ENCODE measurements at regions of chr14 and their contacts with region 1.

Region 1: GRCh38 chr14:22556990-22557623 is 31.9 kb downstream of the DAD1 start:
- DNase-seq: peak; percentile 84 to 97 (median 93)
- ATAC-seq: peak; percentile 48
- H3K4me3 ChIP-seq: peak overlapping the region; percentile 65
- H3K4me3 Mint-ChIP-seq: peak overlapping the region; percentile 67 to 95 (median 88)
- H3K27ac ChIP-seq: peak overlapping the region; percentile 96
- H3K27ac Mint-ChIP-seq: peak overlapping the region; percentile 94 to 99 (median 99)
- H3K4me1 ChIP-seq: peaks cover 87 to 90% of the 10 kb centered on the region in 2 donors
- H3K4me1 Mint-ChIP-seq: peaks cover 62 to 95% (median 92%) of the 10 kb centered on the region in 7 donors
- H3K27me3 ChIP-seq: no peaks in the 10 kb centered on the region
- H3K27me3 Mint-ChIP-seq: peaks cover 0 to 4% (median 0%) of the 10 kb centered on the region in 5 donors

Region 2: DNA sequence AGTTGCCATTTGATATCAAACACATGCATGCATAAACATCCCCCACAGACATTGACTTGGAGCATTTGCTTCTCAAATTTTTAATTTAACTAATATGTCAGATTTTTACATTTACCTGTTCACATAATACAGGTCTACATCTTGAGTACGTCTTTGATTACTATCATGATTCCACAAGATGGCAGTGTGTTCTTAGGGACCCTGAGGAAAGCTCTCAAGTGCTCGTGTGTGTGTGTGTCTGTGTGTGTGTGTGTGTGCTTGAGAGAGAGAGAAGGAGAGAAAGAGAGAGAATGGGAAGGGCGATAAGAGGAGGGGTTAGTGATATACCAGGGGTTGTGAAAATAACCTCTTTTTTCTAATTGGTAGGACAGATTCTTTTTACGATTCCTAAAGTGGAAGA is 716.3 kb before region 1 on chr14:
- CTCF ChIA-PET with region 1: interaction called, 3 read pairs
- POLR2A ChIA-PET with region 1: interaction called, 21 read pairs
- intact Hi-C with region 1: loop called (anchors 1 to 5 kb)
- DNase-seq: peak in 6 of 9 donors; percentile 21 to 50 (median 33)
- ATAC-seq: peak; percentile 76
- H3K4me3 ChIP-seq: no peak overlapping the region
- H3K4me3 Mint-ChIP-seq: peak overlapping the region; percentile 41 to 83 (median 66)
- H3K27ac ChIP-seq: no peak overlapping the region
- H3K27ac Mint-ChIP-seq: peak overlapping the region in 8 of 9 donors; percentile 50 to 90 (median 78)
- H3K4me1 ChIP-seq: no peaks in the 10 kb centered on the region
- H3K4me1 Mint-ChIP-seq: peaks cover 0 to 10% (median 5%) of the 10 kb centered on the region in 7 donors
- H3K27me3 ChIP-seq: no peaks in the 10 kb centered on the region
- H3K27me3 Mint-ChIP-seq: peaks cover 5 to 41% (median 16%) of the 10 kb centered on the region in 5 donors

Region 3: GRCh38 chr14:21965042-21965441 is 592.1 kb before region 1 on chr14:
- CTCF ChIA-PET with region 1: interaction called, 5 read pairs
- POLR2A ChIA-PET with region 1: interaction called, 3 read pairs
- intact Hi-C with region 1: loop called in 1 of 2 experiments (anchors 1 kb)
- DNase-seq: peak in 8 of 9 donors; percentile 21 to 72 (median 61)
- ATAC-seq: peak; percentile 88
- H3K4me3 ChIP-seq: no peak overlapping the region
- H3K4me3 Mint-ChIP-seq: peak overlapping the region; percentile 50 to 78 (median 70)
- H3K27ac ChIP-seq: no peak overlapping the region
- H3K27ac Mint-ChIP-seq: peak overlapping the region; percentile 12 to 90 (median 78)
- H3K4me1 ChIP-seq: no peaks in the 10 kb centered on the region
- H3K4me1 Mint-ChIP-seq: peaks cover 8 to 48% (median 33%) of the 10 kb centered on the region in 7 donors
- H3K27me3 ChIP-seq: no peaks in the 10 kb centered on the region
- H3K27me3 Mint-ChIP-seq: peaks cover 0 to 12% (median 0%) of the 10 kb centered on the region in 5 donors

Region 4: GRCh38 chr14:22163051-22163450 is 394.1 kb before region 1 on chr14:
- CTCF ChIA-PET with region 1: interaction called, 3 read pairs
- POLR2A ChIA-PET with region 1: interaction called, 3 read pairs
- intact Hi-C with region 1: loop called (anchors 1 to 5 kb)
- DNase-seq: peak in 4 of 9 donors; percentile 0 to 31 (median 23)
- ATAC-seq: peak; percentile 46
- H3K4me3 ChIP-seq: peak overlapping the region; percentile 20
- H3K4me3 Mint-ChIP-seq: peak overlapping the region; percentile 47 to 92 (median 88)
- H3K27ac ChIP-seq: no peak overlapping the region
- H3K27ac Mint-ChIP-seq: peak overlapping the region; percentile 29 to 91 (median 81)
- H3K4me1 ChIP-seq: no peaks in the 10 kb centered on the region
- H3K4me1 Mint-ChIP-seq: peaks cover 0 to 25% (median 20%) of the 10 kb centered on the region in 7 donors
- H3K27me3 ChIP-seq: no peaks in the 10 kb centered on the region
- H3K27me3 Mint-ChIP-seq: peaks cover 0 to 4% (median 0%) of the 10 kb centered on the region in 5 donors

Region 5: DNA sequence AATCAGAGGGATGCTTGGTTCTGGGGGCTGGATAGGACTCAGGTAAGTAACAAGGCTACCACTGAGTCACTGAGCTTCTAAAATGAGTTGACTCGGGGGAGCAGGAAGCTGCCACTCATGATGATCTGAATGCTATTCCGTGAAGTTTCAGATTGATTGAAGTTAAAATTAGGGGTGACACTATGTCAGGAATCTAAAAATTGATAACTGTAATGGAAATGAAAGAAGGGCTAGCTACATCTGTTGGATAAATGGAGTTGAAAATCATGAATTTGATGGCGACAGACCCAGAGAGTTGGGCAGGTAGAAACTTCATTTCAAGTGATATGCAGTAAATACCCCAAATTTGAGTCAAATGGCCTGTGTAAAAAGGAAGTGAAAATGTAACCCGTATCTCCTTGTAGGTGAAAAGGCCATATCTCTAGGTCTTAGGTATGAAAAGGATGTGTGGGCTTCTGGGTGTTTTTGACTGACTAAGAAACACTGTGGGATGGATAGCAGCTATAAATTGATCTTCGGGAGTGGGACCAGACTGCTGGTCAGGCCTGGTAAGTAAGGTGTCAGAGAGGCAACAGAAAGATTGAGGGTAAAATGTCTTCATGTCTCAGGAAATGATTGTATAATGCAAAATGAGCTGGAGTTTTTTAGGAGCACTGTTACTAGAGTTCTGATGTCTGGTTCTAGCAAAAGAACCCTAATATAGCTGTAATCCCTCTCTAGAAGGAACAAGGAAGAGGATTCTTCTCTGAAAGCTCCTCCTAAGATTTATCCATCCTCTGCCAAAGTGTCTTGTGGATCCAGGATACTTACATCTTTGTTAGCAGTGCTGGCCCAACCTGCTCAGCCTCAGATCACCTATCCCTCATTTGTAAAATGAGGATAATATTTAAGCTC is 25.4 kb before region 1 on chr14:
- CTCF ChIA-PET with region 1: interaction called, 17 read pairs
- POLR2A ChIA-PET with region 1: interaction called, 525 read pairs
- intact Hi-C with region 1: loop called in 1 of 2 experiments (anchors 1 kb)
- DNase-seq: peak in 2 of 9 donors; percentile 55 to 61
- ATAC-seq: peak; percentile 51
- H3K4me3 ChIP-seq: peak overlapping the region; percentile 44
- H3K4me3 Mint-ChIP-seq: peak overlapping the region; percentile 79 to 92 (median 86)
- H3K27ac ChIP-seq: peak overlapping the region; percentile 90
- H3K27ac Mint-ChIP-seq: peak overlapping the region; percentile 90 to 99 (median 94)
- H3K4me1 ChIP-seq: peaks cover 77 to 90% of the 10 kb centered on the region in 2 donors
- H3K4me1 Mint-ChIP-seq: peaks cover 56 to 98% (median 92%) of the 10 kb centered on the region in 7 donors
- H3K27me3 ChIP-seq: no peaks in the 10 kb centered on the region
- H3K27me3 Mint-ChIP-seq: no peaks in the 10 kb centered on the region

Region 6: GRCh38 chr14:22872033-22872832 is 315.1 kb after region 1 on chr14:
- CTCF ChIA-PET with region 1: interaction called, 3 read pairs
- POLR2A ChIA-PET with region 1: interaction called, 3 read pairs
- intact Hi-C with region 1: loop called in 1 of 2 experiments (anchors 1 kb)
- DNase-seq: peak; percentile 55 to 76 (median 69)
- ATAC-seq: peak; percentile 57
- H3K4me3 ChIP-seq: peak overlapping the region; percentile 72
- H3K4me3 Mint-ChIP-seq: peak overlapping the region; percentile 87 to 98 (median 95)
- H3K27ac ChIP-seq: peak overlapping the region; percentile 86
- H3K27ac Mint-ChIP-seq: peak overlapping the region; percentile 83 to 98 (median 94)
- H3K4me1 ChIP-seq: peaks cover 20 to 33% of the 10 kb centered on the region in 2 donors
- H3K4me1 Mint-ChIP-seq: peaks cover 26 to 49% (median 29%) of the 10 kb centered on the region in 7 donors
- H3K27me3 ChIP-seq: no peaks in the 10 kb centered on the region
- H3K27me3 Mint-ChIP-seq: no peaks in the 10 kb centered on the region

Measured in naive thymus-derived CD4-positive, alpha-beta T cell (primary cell).